Transverse colon (tissue), 4 donors: ENCODE measurements at regions of chr2 and their contacts with region 1.

Region 1: GRCh38 chr2:205680067-205680466 is 2.2 kb upstream of the NRP2 start:
- DNase-seq: peak; percentile 53
- H3K4me3 ChIP-seq: no peak overlapping the region
- H3K27ac ChIP-seq: peak overlapping the region in 2 of 4 donors; percentile 12 to 46
- H3K4me1 ChIP-seq: peaks cover 0 to 26% (median 5%) of the 10 kb centered on the region in 4 donors
- H3K27me3 ChIP-seq: peaks cover 38% of the 10 kb centered on the region
- CTCF ChIP-seq: peak; percentile 58 to 67 (median 65)
- EP300 ChIP-seq: no peak
- POLR2A ChIP-seq: no peak

Region 2: DNA sequence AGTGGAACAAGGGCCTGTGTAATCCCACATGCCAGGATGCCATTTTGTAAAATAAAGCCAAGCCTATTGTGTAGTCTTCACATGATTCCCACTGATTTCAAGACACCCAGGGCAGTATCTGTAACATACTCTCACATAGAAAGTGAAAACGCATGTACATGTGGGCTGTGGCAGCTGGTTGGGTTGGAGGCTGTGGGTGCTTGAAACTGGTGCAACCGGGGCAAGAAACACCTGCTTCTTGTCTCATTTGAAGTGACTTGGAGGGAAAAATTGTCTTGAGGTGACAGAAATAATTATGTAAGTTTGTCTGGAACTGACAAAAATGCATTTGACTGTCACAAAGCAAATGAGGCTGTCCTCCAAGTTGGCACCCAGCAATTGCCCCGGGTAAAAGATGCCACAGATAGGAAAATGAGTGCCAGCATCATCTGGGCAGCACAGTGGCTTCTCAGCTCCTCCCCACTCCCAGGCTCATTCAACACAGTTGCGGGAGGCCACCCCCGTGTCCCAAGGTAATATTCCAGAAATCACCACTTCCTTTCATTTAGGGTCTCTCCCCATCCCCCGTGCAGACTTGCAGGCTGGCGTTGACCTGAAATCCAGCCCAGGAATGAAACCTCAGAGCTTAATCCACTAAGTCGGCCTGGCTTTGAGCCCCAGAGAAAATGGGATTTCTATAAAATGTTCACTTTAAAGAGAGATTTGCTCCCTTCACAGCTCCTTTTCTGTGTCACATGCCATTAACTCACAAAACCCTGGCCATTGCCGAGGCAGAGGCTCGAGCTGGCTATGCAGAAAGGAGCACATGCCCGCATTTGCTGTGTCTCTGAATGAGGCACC is 1428.7 kb before region 1 on chr2:
- in situ Hi-C with region 1: no loop called
- intact Hi-C with region 1: loop called (anchors 10 kb)
- DNase-seq: no peak
- H3K4me3 ChIP-seq: no peak overlapping the region
- H3K27ac ChIP-seq: no peak overlapping the region
- H3K4me1 ChIP-seq: no peaks in the 10 kb centered on the region
- H3K27me3 ChIP-seq: no peaks in the 10 kb centered on the region
- CTCF ChIP-seq: no peak
- EP300 ChIP-seq: no peak
- POLR2A ChIP-seq: no peak

Region 3: DNA sequence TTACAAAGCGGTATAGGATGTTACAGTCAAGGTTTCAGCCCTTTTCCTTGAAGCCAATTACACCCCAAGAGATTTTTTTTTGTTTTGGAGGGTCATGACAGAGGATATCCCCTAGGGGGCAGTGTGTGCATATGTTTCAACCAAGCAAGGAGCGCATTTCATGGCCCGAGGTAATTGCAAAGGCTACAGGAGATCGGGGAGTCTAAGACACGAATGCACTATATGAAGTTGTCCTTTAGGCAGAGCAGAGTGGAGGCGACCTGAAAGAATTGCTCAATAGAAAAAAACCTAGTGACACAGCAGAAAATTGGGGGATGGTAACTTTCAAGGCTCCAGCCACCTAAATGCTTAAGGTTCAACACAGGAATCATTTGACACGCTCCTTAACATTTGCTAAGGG is 1354.6 kb before region 1 on chr2:
- in situ Hi-C with region 1: loop called in 2 of 4 experiments (anchors 10 kb)
- intact Hi-C with region 1: loop called (anchors 10 kb)
- DNase-seq: peak; percentile 62
- H3K4me3 ChIP-seq: no peak overlapping the region
- H3K27ac ChIP-seq: no peak overlapping the region
- H3K4me1 ChIP-seq: peaks cover 0 to 4% (median 0%) of the 10 kb centered on the region in 4 donors
- H3K27me3 ChIP-seq: no peaks in the 10 kb centered on the region
- CTCF ChIP-seq: peak; percentile 82 to 96 (median 90)
- EP300 ChIP-seq: no peak
- POLR2A ChIP-seq: no peak

Region 4: GRCh38 chr2:204681412-204681811 is 998.7 kb before region 1 on chr2:
- in situ Hi-C with region 1: no loop called
- intact Hi-C with region 1: loop called (anchors 10 kb)
- DNase-seq: no peak
- H3K4me3 ChIP-seq: no peak overlapping the region
- H3K27ac ChIP-seq: peak overlapping the region in 3 of 4 donors; percentile 28 to 49 (median 45)
- H3K4me1 ChIP-seq: peaks cover 0 to 19% (median 0%) of the 10 kb centered on the region in 4 donors
- H3K27me3 ChIP-seq: no peaks in the 10 kb centered on the region
- CTCF ChIP-seq: no peak
- EP300 ChIP-seq: no peak
- POLR2A ChIP-seq: no peak

Region 5: GRCh38 chr2:204860274-204860673 is 819.8 kb before region 1 on chr2:
- in situ Hi-C with region 1: no loop called
- intact Hi-C with region 1: loop called (anchors 10 kb)
- DNase-seq: no peak
- H3K4me3 ChIP-seq: no peak overlapping the region
- H3K27ac ChIP-seq: no peak overlapping the region
- H3K4me1 ChIP-seq: no peaks in the 10 kb centered on the region
- H3K27me3 ChIP-seq: no peaks in the 10 kb centered on the region
- CTCF ChIP-seq: no peak
- EP300 ChIP-seq: no peak
- POLR2A ChIP-seq: no peak

Region 6: DNA sequence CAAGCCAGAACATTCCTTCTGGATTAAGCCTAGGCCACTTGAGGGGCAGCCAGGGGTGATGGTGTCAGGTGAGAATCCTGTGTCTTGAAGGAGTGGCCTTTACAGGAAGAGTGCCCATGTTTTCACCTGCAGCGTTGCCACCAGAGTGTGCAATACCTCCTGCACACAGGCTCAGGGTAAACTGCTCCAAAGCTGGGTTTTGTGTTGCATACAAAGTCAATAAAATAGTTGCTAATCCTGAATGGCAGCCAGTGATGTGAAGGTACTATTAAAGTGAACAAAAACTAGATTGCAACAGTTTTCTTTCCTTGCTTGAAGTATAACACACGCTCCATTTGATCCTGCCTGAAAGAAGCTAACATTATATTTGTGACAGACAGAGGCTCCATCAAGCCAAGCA is 62.2 kb before region 1 on chr2:
- in situ Hi-C with region 1: no loop called
- intact Hi-C with region 1: no loop called
- DNase-seq: no peak
- H3K4me3 ChIP-seq: no peak overlapping the region
- H3K27ac ChIP-seq: no peak overlapping the region
- H3K4me1 ChIP-seq: peaks cover 0 to 7% (median 4%) of the 10 kb centered on the region in 4 donors
- H3K27me3 ChIP-seq: no peaks in the 10 kb centered on the region
- CTCF ChIP-seq: no peak
- EP300 ChIP-seq: no peak
- POLR2A ChIP-seq: no peak

Region 7: GRCh38 chr2:205734436-205735037 is 54.5 kb after region 1 on chr2:
- in situ Hi-C with region 1: no loop called
- intact Hi-C with region 1: loop called (anchors 10 kb)
- DNase-seq: no peak
- H3K4me3 ChIP-seq: no peak overlapping the region
- H3K27ac ChIP-seq: peak overlapping the region; percentile 69 to 86 (median 80)
- H3K4me1 ChIP-seq: peaks cover 6 to 44% (median 17%) of the 10 kb centered on the region in 4 donors
- H3K27me3 ChIP-seq: no peaks in the 10 kb centered on the region
- CTCF ChIP-seq: no peak
- EP300 ChIP-seq: no peak
- POLR2A ChIP-seq: no peak

Region 8: GRCh38 chr2:205766779-205767359 is 86.8 kb after region 1 on chr2:
- in situ Hi-C with region 1: no loop called
- intact Hi-C with region 1: loop called (anchors 10 kb)
- DNase-seq: peak; percentile 68
- H3K4me3 ChIP-seq: no peak overlapping the region
- H3K27ac ChIP-seq: peak overlapping the region; percentile 68 to 86 (median 74)
- H3K4me1 ChIP-seq: peaks cover 38 to 80% (median 53%) of the 10 kb centered on the region in 4 donors
- H3K27me3 ChIP-seq: no peaks in the 10 kb centered on the region
- CTCF ChIP-seq: peak; percentile 80 to 93 (median 89)
- EP300 ChIP-seq: no peak
- POLR2A ChIP-seq: no peak